WTC11 (cell line): ENCODE measurements at regions of chr3 and their contacts with region 1.

Region 1: DNA sequence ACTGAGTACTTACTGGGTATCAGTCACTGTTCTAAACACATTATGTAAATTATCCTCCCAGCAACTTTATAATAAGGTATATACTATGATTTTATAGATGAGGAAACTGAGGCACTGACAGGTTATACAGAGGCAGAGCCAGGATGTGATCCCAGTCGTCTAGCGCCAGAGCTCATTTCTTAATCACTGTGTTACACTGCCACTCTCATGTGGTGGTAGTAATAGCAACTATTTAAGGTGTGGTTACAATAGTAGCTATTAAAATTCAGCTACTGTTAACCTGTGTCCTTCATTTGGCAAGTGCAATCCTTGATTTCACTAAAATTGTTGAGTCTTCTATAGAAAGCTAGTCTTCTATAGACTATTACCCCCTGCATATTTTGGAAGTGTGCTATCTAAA is 43.1 kb upstream of the TRPC1 start:
- DNase-seq: no peak
- ATAC-seq: peak; percentile 51; the same call in 1 of the 2 replicates
- H3K4me3 Mint-ChIP-seq: no peak overlapping the region
- H3K27ac Mint-ChIP-seq: no peak overlapping the region
- H3K4me1 Mint-ChIP-seq: no peaks in the 10 kb centered on the region
- H3K27me3 Mint-ChIP-seq: no peaks in the 10 kb centered on the region
- CTCF ChIP-seq: no peak

Region 2: DNA sequence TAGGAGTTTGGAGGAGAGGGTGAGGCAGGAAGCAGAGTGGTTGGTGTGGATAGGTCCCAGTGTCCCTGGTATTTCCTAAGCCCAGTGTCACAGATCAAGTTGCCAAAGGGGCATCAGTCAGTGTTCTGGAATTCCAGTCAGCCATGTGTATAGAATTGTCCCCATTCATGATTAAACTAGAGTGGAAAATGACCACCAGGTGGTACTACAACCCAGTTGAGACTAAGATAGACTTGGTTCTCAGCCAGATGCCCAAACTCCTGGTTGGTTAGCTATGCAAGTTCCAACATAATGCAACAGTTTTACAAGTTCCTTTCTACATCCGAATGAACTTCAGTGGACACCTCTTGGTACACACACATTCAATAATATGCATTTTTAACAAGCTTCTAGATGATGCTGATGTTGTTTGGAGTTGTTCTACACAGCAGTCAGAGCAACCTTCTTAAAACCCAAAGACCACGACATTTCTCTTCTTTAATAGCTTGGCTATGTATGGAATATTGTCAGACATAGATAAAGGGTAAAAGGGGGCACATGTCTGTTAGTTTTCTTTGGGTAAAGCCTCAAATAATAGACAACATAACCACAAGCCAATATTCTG is 93.8 kb before region 1 on chr3:
- CTCF ChIA-PET with region 1: interaction called, 20 read pairs
- POLR2A ChIA-PET with region 1: no interaction called
- DNase-seq: no peak
- ATAC-seq: peak; percentile 96
- H3K4me3 Mint-ChIP-seq: no peak overlapping the region
- H3K27ac Mint-ChIP-seq: no peak overlapping the region
- H3K4me1 Mint-ChIP-seq: no peaks in the 10 kb centered on the region
- H3K27me3 Mint-ChIP-seq: no peaks in the 10 kb centered on the region
- CTCF ChIP-seq: peak; percentile 46; the same call in 1 of the 2 replicates